Heart right ventricle (tissue), 16 donors: ENCODE measurements at regions of chr20 and their contacts with region 1.

Region 1: GRCh38 chr20:62500237-62500864 is 24.6 kb upstream of the GATA5 start:
- DNase-seq: peak; percentile 78 to 85
- ATAC-seq: peak; percentile 59 to 86 (median 75)
- H3K4me3 ChIP-seq: no peak overlapping the region
- H3K27ac ChIP-seq: no peak overlapping the region
- H3K4me1 ChIP-seq: peaks cover 0 to 25% (median 14%) of the 10 kb centered on the region in 9 donors
- H3K27me3 ChIP-seq: peaks cover 0 to 7% (median 0%) of the 10 kb centered on the region in 7 donors
- CTCF ChIP-seq: peak; percentile 73 to 85 (median 82)

Region 2: GRCh38 chr20:62302341-62303058 is 197.9 kb before region 1 on chr20 and contains the start of gene ADRM1:
- intact Hi-C with region 1: loop called in 1 of 10 experiments (anchors 10 kb)
- DNase-seq: peak; percentile 95 to 97
- ATAC-seq: peak; percentile 87 to 94 (median 92)
- H3K4me3 ChIP-seq: peak within 1 kb of the TSS; percentile 79 to 98 (median 88)
- H3K27ac ChIP-seq: peak within 1 kb of the TSS; percentile 92 to 100 (median 98)
- H3K4me1 ChIP-seq: peaks cover 16 to 47% (median 30%) of the 10 kb centered on the region in 9 donors
- H3K27me3 ChIP-seq: no peaks in the 10 kb centered on the region
- CTCF ChIP-seq: peak; percentile 91 to 99 (median 97)
- total RNA-seq, gene ADRM1: 67.7 to 97.0 (median 73.2) TPM

Region 3: DNA sequence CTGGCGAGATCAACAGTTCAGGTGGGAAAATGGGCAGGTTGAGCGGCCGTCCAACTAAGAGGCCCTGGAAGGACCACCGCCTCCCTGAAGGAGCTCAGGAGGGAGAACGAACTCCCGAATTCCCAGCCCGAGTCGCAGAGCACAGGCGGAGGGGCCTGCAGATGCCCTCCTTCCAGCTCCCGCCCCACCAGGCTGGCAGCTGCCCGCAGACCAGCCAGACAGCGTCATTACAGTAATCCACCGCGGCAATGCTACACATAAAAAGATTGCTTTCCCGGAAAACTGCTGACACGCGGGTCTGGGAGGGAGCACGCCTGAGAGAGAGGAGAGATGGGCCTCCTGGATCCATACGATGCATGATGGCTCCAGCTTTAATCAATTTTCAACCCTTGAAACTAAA is 111.5 kb after region 1 on chr20:
- intact Hi-C with region 1: loop called (anchors 2 to 5 kb)
- DNase-seq: no peak
- ATAC-seq: no peak
- H3K4me3 ChIP-seq: no peak overlapping the region
- H3K27ac ChIP-seq: no peak overlapping the region
- H3K4me1 ChIP-seq: peaks cover 2 to 11% (median 10%) of the 10 kb centered on the region in 9 donors
- H3K27me3 ChIP-seq: peaks cover 0 to 38% (median 4%) of the 10 kb centered on the region in 7 donors
- CTCF ChIP-seq: no peak

Region 4: GRCh38 chr20:62668441-62669027 is 168.2 kb after region 1 on chr20:
- intact Hi-C with region 1: loop called in 1 of 10 experiments (anchors 5 kb)
- DNase-seq: peak; percentile 58 to 82
- ATAC-seq: peak; percentile 36 to 82 (median 70)
- H3K4me3 ChIP-seq: no peak overlapping the region
- H3K27ac ChIP-seq: no peak overlapping the region
- H3K4me1 ChIP-seq: peaks cover 0 to 27% (median 23%) of the 10 kb centered on the region in 9 donors
- H3K27me3 ChIP-seq: no peaks in the 10 kb centered on the region
- CTCF ChIP-seq: peak; percentile 60 to 88 (median 86)

Region 5: DNA sequence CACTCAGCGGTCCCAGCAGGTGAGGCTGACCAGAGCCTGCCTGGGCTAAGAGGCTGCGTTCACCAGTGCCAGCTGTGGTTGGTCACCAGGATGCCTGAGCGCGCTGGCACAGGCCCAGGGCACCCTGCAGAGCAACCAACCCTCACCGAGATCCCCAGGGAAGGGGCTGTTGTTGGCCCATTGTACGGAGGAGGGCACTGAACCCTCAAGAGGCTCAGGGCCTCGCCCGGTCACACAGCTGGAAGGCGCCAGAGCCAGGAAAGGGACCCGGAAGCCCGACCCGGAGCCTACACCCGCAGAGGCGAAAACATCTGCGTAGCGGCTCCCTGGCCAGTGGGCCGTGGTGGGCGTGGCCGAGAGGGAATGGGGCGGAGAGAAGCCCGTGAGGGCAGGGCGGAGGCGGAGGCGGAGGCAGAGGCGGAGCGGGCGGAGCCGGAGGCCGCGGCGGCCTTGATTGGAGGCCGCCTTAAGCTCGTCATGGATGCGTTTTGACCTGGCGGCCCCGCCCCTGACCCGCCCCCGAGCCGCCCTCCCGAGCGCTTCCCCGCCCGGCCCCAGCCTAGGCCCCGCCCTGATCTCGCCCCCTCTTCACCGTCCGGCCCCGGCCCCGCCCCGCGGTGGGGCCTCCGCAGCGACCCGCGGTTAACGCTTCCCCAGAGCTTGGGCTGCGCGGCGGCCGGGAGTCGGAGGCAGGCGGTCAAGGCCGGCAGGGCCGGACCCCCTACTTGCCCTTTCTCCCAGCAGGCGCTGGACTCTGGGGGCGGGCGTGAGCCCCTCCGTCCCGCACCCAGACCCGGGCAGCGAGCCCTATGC is 293.8 kb after region 1 on chr20:
- intact Hi-C with region 1: loop called in 9 of 10 experiments (anchors 1 to 10 kb)
- DNase-seq: peak; percentile 97 to 99
- ATAC-seq: peak; percentile 91 to 95 (median 92)
- H3K4me3 ChIP-seq: peak overlapping the region; percentile 14 to 97 (median 69)
- H3K27ac ChIP-seq: peak overlapping the region; percentile 70 to 96 (median 92)
- H3K4me1 ChIP-seq: peaks cover 6 to 50% (median 38%) of the 10 kb centered on the region in 9 donors
- H3K27me3 ChIP-seq: no peaks in the 10 kb centered on the region
- CTCF ChIP-seq: no peak

Region 6: GRCh38 chr20:62818592-62819493 is 318.5 kb after region 1 on chr20:
- intact Hi-C with region 1: no loop called
- DNase-seq: peak; percentile 74 to 82
- ATAC-seq: peak; percentile 42 to 77 (median 58)
- H3K4me3 ChIP-seq: peak overlapping the region in 5 of 10 donors; percentile 6 to 48 (median 34)
- H3K27ac ChIP-seq: peak overlapping the region in 8 of 10 donors; percentile 2 to 76 (median 60)
- H3K4me1 ChIP-seq: peaks cover 20 to 58% (median 42%) of the 10 kb centered on the region in 9 donors
- H3K27me3 ChIP-seq: peaks cover 20 to 55% (median 37%) of the 10 kb centered on the region in 7 donors
- CTCF ChIP-seq: no peak